WTC11 (cell line): ENCODE measurements at regions of chr14 and their contacts with region 1.

Region 1: DNA sequence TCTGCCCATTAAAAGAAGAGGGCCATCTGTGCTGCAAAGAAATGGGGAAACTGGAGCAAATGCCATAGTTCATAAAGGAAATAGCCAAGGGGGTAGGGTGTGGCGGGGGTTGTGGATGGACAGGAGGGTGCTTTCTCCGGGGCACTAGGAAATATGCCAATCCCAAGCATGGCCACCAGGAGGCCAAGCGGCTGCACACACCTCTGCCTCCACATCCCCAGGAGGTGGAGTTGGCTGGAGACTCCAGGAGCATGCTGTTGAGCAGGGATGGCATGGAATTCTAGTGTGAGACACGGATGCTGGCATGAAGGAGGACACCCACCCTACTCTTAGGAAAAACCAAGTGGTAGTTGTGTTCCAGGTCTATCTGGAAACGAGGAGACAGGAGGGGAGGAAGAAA is 25.2 kb downstream of the NID2 start:
- DNase-seq: peak; percentile 73
- ATAC-seq: peak; percentile 97
- H3K4me3 Mint-ChIP-seq: no peak overlapping the region
- H3K27ac Mint-ChIP-seq: no peak overlapping the region
- H3K4me1 Mint-ChIP-seq: peaks cover 6% of the 10 kb centered on the region
- H3K27me3 Mint-ChIP-seq: no peaks in the 10 kb centered on the region; the same call in 1 of the 2 replicates
- CTCF ChIP-seq: peak; percentile 75

Region 2: DNA sequence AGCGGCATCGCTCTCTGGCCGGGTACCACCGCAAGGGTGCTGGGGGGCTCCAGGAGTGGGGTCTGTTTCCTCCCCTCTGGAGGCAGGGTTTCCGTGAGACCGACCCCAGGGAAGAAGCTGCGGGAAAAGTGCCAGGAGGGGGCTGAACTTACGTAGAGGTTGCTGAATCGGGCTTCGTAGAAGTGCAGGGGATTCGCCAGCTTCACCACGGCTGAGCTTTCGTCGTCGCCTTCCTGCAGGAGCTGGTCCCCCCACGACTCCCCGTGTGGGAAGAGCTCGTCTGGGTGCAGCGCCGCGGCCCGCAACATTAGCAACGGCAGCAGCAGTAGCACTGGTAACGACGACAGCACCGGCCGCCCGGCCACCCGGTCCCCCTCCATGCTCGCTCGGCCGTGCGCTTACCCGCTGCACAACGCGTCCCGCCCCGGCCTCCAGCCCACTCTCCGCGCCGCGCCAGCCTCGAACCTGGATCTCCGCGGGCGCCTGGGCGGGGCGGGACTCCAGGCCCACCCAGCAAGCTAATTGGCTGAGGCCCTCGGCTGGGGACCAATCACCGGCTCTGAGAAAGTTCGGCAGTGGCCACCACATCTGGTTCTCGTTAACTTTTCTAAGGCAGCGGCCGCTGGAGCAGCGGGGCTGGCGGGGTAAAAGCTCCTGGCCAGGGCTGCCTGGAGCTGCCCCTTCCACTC is 25.1 kb after region 1 on chr14 and contains the start of gene NID2:
- CTCF ChIA-PET with region 1: interaction called, 55 read pairs
- POLR2A ChIA-PET with region 1: no interaction called
- DNase-seq: peak; percentile 91
- ATAC-seq: peak; percentile 86
- H3K4me3 Mint-ChIP-seq: peak within 1 kb of the TSS; percentile 77
- H3K27ac Mint-ChIP-seq: no peak within 1 kb of the TSS
- H3K4me1 Mint-ChIP-seq: peaks cover 18% of the 10 kb centered on the region
- H3K27me3 Mint-ChIP-seq: peaks cover 63% of the 10 kb centered on the region
- CTCF ChIP-seq: no peak
- total RNA-seq, gene NID2: 5.4 to 8.5 TPM (median 6.3 TPM) in 3 replicates

Region 3: GRCh38 chr14:52131640-52132320 is 88.1 kb after region 1 on chr14:
- CTCF ChIA-PET with region 1: interaction called, 23 read pairs
- POLR2A ChIA-PET with region 1: no interaction called
- DNase-seq: peak; percentile 76
- ATAC-seq: peak; percentile 99
- H3K4me3 Mint-ChIP-seq: no peak overlapping the region
- H3K27ac Mint-ChIP-seq: no peak overlapping the region
- H3K4me1 Mint-ChIP-seq: peaks cover 19% of the 10 kb centered on the region
- H3K27me3 Mint-ChIP-seq: no peaks in the 10 kb centered on the region
- CTCF ChIP-seq: peak; percentile 51